Heart right ventricle (tissue), 16 donors: ENCODE measurements at regions of chr11 and their contacts with region 1.

Region 1: GRCh38 chr11:14643697-14644225 is at the start of gene PDE3B:
- DNase-seq: peak; percentile 77 to 84
- ATAC-seq: peak; percentile 88 to 96 (median 94)
- H3K4me3 ChIP-seq: peak within 1 kb of the TSS; percentile 63 to 90 (median 84)
- H3K27ac ChIP-seq: peak within 1 kb of the TSS; percentile 68 to 90 (median 83)
- H3K4me1 ChIP-seq: peaks cover 0 to 34% (median 5%) of the 10 kb centered on the region in 9 donors
- H3K27me3 ChIP-seq: peaks cover 0 to 20% (median 0%) of the 10 kb centered on the region in 7 donors
- CTCF ChIP-seq: peak in 1 of 9 donors; percentile 21
- total RNA-seq, gene PDE3B: 5.5 to 14.2 (median 9.4) TPM

Region 2: GRCh38 chr11:14537134-14537599 is 106.6 kb before region 1 on chr11:
- intact Hi-C with region 1: loop called in 8 of 10 experiments (anchors 5 to 10 kb)
- DNase-seq: peak in 1 of 2 donors; percentile 28
- ATAC-seq: no peak
- H3K4me3 ChIP-seq: peak overlapping the region in 1 of 10 donors; percentile 24
- H3K27ac ChIP-seq: peak overlapping the region in 4 of 10 donors; percentile 46 to 72 (median 58)
- H3K4me1 ChIP-seq: peaks cover 0 to 51% (median 44%) of the 10 kb centered on the region in 9 donors
- H3K27me3 ChIP-seq: no peaks in the 10 kb centered on the region
- CTCF ChIP-seq: peak; percentile 66 to 84 (median 79)

Region 3: GRCh38 chr11:14544611-14545010 is 99.2 kb before region 1 on chr11:
- intact Hi-C with region 1: loop called in 8 of 10 experiments (anchors 5 to 10 kb)
- DNase-seq: no peak
- ATAC-seq: no peak
- H3K4me3 ChIP-seq: no peak overlapping the region
- H3K27ac ChIP-seq: no peak overlapping the region
- H3K4me1 ChIP-seq: peaks cover 0 to 57% (median 20%) of the 10 kb centered on the region in 9 donors
- H3K27me3 ChIP-seq: no peaks in the 10 kb centered on the region
- CTCF ChIP-seq: no peak

Region 4: GRCh38 chr11:14554959-14555358 is 88.8 kb before region 1 on chr11:
- intact Hi-C with region 1: loop called in 1 of 10 experiments (anchors 10 kb)
- DNase-seq: peak in 1 of 2 donors; percentile 24
- ATAC-seq: peak in 6 of 8 donors; percentile 65 to 84 (median 78)
- H3K4me3 ChIP-seq: no peak overlapping the region
- H3K27ac ChIP-seq: peak overlapping the region in 4 of 10 donors; percentile 17 to 59 (median 44)
- H3K4me1 ChIP-seq: peaks cover 0 to 35% (median 11%) of the 10 kb centered on the region in 9 donors
- H3K27me3 ChIP-seq: no peaks in the 10 kb centered on the region
- CTCF ChIP-seq: no peak

Region 5: GRCh38 chr11:14892036-14892567 is 248.3 kb after region 1 on chr11 and contains the start of gene CYP2R1:
- intact Hi-C with region 1: loop called in 3 of 10 experiments (anchors 5 to 10 kb)
- DNase-seq: peak; percentile 94 to 97
- ATAC-seq: peak; percentile 98 to 99 (median 99)
- H3K4me3 ChIP-seq: peak within 1 kb of the TSS; percentile 57 to 94 (median 84)
- H3K27ac ChIP-seq: peak within 1 kb of the TSS; percentile 16 to 96 (median 90)
- H3K4me1 ChIP-seq: peaks cover 0 to 36% (median 10%) of the 10 kb centered on the region in 9 donors
- H3K27me3 ChIP-seq: no peaks in the 10 kb centered on the region
- CTCF ChIP-seq: peak in 1 of 9 donors; percentile 11
- total RNA-seq, gene CYP2R1: 4.6 to 7.3 (median 6.3) TPM

Region 6: DNA sequence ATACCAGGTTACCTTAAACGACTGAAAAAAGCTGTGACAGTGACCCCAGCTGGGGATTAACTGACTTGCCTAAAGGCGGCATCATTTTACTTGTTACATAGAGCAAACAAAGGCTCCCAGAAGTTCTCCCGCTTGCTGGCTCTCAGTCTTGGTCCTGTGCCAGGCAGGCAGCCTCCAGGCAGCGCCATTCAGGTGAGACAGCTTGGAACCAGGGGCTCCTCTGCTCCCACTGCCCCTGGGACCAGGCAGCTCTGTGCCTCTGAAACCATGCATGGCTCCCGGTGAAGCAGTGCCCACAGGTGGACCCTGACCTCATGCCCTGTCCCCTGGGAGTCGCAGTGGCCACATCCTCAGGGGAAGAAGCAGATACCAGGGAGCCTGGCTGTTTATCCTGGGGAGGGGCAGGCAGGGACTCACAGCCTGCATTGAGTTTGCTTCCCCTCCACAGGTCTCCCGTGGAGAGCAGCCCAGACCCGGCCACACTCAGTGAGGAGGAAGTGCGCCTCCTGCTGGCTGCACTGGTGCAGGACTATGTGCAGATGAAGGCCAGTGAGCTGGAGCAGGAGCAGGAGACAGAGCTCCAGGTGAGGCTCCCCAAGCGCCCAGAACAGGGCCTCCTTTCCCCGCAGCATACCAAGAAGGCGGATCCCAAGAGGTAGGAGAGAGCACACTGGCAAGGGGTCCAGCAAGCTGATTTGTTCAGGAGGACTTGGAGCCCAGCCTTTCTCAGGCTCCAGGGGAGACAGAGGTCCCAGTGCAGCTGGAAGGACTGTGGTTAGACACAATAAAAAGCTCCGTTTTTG is 263.9 kb after region 1 on chr11:
- intact Hi-C with region 1: loop called in 2 of 10 experiments (anchors 10 kb)
- DNase-seq: peak; percentile 64 to 83
- ATAC-seq: peak; percentile 40 to 75 (median 72)
- H3K4me3 ChIP-seq: no peak overlapping the region
- H3K27ac ChIP-seq: no peak overlapping the region
- H3K4me1 ChIP-seq: peaks cover 0 to 19% (median 12%) of the 10 kb centered on the region in 9 donors
- H3K27me3 ChIP-seq: peaks cover 0 to 8% (median 0%) of the 10 kb centered on the region in 7 donors
- CTCF ChIP-seq: peak; percentile 52 to 90 (median 76)

Region 7: GRCh38 chr11:14969922-14970323 is 326.2 kb after region 1 on chr11:
- intact Hi-C with region 1: no loop called
- DNase-seq: peak in 1 of 2 donors; percentile 28
- ATAC-seq: peak in 4 of 8 donors; percentile 29 to 59 (median 32)
- H3K4me3 ChIP-seq: no peak overlapping the region
- H3K27ac ChIP-seq: no peak overlapping the region
- H3K4me1 ChIP-seq: peaks cover 2 to 33% (median 23%) of the 10 kb centered on the region in 9 donors
- H3K27me3 ChIP-seq: peaks cover 27 to 77% (median 70%) of the 10 kb centered on the region in 7 donors
- CTCF ChIP-seq: peak in 6 of 9 donors; percentile 35 to 52 (median 47)